PC-9 (cell line): ENCODE measurements at regions of chr17 and their contacts with region 1.

Region 1: GRCh38 chr17:58631523-58632323 is 60.1 kb downstream of the TEX14 start:
- DNase-seq: peak; percentile 92 to 99
- H3K4me3 ChIP-seq: peak overlapping the region; percentile 62
- H3K27ac ChIP-seq: peak overlapping the region; percentile 86
- H3K4me1 ChIP-seq: peaks cover 5% of the 10 kb centered on the region
- H3K27me3 ChIP-seq: no peaks in the 10 kb centered on the region
- CTCF ChIP-seq: peak; percentile 35; the same call in 1 of the 2 replicates

Region 2: GRCh38 chr17:57823469-57824401 is 808.0 kb before region 1 on chr17:
- CTCF ChIA-PET with region 1: no interaction called
- POLR2A ChIA-PET with region 1: no interaction called
- intact Hi-C with region 1: no loop called
- DNase-seq: no peak
- H3K4me3 ChIP-seq: no peak overlapping the region
- H3K27ac ChIP-seq: no peak overlapping the region
- H3K4me1 ChIP-seq: no peaks in the 10 kb centered on the region
- H3K27me3 ChIP-seq: peaks cover 14% of the 10 kb centered on the region
- CTCF ChIP-seq: no peak

Region 3: GRCh38 chr17:58504826-58505521 is 126.7 kb before region 1 on chr17:
- CTCF ChIA-PET with region 1: no interaction called
- POLR2A ChIA-PET with region 1: no interaction called
- intact Hi-C with region 1: no loop called
- DNase-seq: peak in 1 of 2 experiments; percentile 11
- H3K4me3 ChIP-seq: no peak overlapping the region
- H3K27ac ChIP-seq: no peak overlapping the region
- H3K4me1 ChIP-seq: no peaks in the 10 kb centered on the region
- H3K27me3 ChIP-seq: no peaks in the 10 kb centered on the region
- CTCF ChIP-seq: no peak

Region 4: GRCh38 chr17:58534901-58535421 is 96.8 kb before region 1 on chr17:
- CTCF ChIA-PET with region 1: no interaction called
- POLR2A ChIA-PET with region 1: interaction called, 17 read pairs
- intact Hi-C with region 1: no loop called
- DNase-seq: peak in 1 of 2 experiments; percentile 66
- H3K4me3 ChIP-seq: no peak overlapping the region
- H3K27ac ChIP-seq: no peak overlapping the region
- H3K4me1 ChIP-seq: peaks cover 15% of the 10 kb centered on the region
- H3K27me3 ChIP-seq: peaks cover 21% of the 10 kb centered on the region
- CTCF ChIP-seq: no peak

Region 5: DNA sequence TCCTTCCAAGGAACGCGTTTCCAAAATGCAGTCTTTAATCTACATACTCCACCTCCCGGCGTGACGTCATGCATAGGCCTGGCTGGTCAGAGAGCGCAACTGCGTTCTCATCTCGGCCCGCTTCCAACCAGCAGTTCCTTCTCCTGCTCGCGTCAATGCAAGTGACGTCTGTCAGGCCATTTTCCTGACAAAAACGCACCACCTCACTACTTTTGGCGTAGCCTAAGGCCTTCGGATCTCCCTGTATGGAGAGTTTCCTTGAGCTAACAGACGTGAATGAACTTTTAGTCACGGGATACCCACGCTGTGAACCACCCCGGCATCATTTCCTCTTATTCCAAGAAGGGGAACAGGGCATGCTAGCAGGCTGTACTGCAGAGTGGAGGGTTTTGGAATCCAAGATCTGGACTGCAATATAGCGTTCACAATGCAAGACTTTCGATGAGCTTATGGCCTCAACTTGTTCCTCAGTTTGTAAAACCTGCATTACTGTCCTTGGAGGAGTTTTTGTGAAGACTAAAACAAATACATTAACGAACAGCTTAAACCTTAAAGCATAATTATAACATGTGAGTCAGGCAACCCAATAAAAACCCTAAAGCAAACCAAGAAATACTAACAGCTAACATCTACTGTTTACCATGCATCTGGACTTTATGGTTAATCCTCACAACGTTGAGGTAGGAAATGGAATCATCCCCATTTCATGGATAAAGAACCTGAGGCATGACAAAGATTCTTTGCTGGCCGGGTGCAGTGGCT is 35.3 kb after region 1 on chr17:
- CTCF ChIA-PET with region 1: no interaction called
- POLR2A ChIA-PET with region 1: interaction called, 11 read pairs
- intact Hi-C with region 1: no loop called
- DNase-seq: no peak
- H3K4me3 ChIP-seq: no peak overlapping the region
- H3K27ac ChIP-seq: peak overlapping the region; percentile 75
- H3K4me1 ChIP-seq: peaks cover 44% of the 10 kb centered on the region
- H3K27me3 ChIP-seq: no peaks in the 10 kb centered on the region
- CTCF ChIP-seq: no peak

Region 6: DNA sequence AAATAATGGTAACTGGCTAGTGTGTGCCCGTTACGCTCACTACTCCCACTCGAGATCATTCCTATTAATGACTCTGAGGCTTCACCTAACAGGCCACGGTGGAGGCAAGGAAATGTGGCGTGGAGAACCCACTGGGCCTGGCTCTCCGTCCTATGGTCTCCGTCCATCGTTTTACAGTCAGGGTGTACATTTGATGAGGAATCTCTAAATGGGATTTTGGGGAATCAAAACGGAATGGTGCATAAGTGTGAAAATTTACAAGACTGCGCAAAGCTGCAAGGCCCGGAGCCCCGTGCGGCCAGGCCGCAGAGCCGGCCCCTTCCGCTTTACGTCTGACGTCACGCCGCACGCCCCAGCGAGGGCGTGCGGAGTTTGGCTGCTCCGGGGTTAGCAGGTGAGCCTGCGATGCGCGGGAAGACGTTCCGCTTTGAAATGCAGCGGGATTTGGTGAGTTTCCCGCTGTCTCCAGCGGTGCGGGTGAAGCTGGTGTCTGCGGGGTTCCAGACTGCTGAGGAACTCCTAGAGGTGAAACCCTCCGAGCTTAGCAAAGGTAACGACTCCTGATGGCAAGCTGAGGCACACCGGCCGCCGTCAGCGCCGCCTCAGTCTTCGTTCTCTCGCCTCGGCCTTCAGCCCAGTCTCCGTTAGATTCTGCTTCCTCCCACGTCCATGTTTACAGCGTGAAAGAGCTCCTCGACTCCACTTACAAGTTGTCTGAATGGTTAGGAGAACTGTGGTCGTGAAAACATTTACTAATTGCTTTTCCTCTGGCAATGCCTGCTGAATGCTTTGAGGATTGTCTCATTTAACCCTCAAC is 60.7 kb after region 1 on chr17 and contains the start of gene RAD51C:
- CTCF ChIA-PET with region 1: interaction called, 3 read pairs
- POLR2A ChIA-PET with region 1: interaction called, 4 read pairs
- intact Hi-C with region 1: loop called (anchors 5 kb)
- DNase-seq: peak; percentile 77 to 81
- H3K4me3 ChIP-seq: peak within 1 kb of the TSS; percentile 59
- H3K27ac ChIP-seq: peak within 1 kb of the TSS; percentile 62
- H3K4me1 ChIP-seq: peaks cover 24% of the 10 kb centered on the region
- H3K27me3 ChIP-seq: no peaks in the 10 kb centered on the region
- CTCF ChIP-seq: no peak
- total RNA-seq, gene RAD51C: 45.7 and 63.4 TPM in 2 replicates

Region 7: GRCh38 chr17:58741121-58741625 is 109.5 kb after region 1 on chr17:
- CTCF ChIA-PET with region 1: no interaction called
- POLR2A ChIA-PET with region 1: no interaction called
- intact Hi-C with region 1: loop called (anchors 1 kb)
- DNase-seq: peak; percentile 28 to 94
- H3K4me3 ChIP-seq: peak overlapping the region; percentile 6; the same call in 1 of the 2 replicates
- H3K27ac ChIP-seq: peak overlapping the region; percentile 79
- H3K4me1 ChIP-seq: peaks cover 13% of the 10 kb centered on the region
- H3K27me3 ChIP-seq: no peaks in the 10 kb centered on the region
- CTCF ChIP-seq: no peak

Region 8: DNA sequence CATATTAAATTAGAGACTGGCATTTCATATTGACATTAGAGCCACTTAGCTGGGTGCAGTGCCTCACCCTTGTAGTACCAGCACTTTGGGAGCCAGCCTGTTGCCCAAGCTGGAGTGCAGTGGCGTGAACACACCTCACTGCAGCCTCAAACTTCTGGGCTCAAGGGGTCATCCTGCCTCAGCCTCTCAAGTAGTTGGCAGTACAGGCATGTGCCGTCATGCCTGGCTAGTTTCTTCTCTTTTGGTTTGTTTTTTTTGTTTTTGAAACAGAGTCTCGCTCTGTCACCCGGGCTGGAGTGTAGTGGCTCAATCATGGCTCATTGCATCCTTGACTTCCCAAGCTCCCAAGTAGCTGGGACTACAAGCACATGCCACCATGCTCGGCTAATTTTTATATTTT is 132.7 kb after region 1 on chr17:
- CTCF ChIA-PET with region 1: no interaction called
- POLR2A ChIA-PET with region 1: no interaction called
- intact Hi-C with region 1: no loop called
- DNase-seq: no peak
- H3K4me3 ChIP-seq: no peak overlapping the region
- H3K27ac ChIP-seq: no peak overlapping the region
- H3K4me1 ChIP-seq: no peaks in the 10 kb centered on the region
- H3K27me3 ChIP-seq: peaks cover 11% of the 10 kb centered on the region
- CTCF ChIP-seq: no peak

Region 9: DNA sequence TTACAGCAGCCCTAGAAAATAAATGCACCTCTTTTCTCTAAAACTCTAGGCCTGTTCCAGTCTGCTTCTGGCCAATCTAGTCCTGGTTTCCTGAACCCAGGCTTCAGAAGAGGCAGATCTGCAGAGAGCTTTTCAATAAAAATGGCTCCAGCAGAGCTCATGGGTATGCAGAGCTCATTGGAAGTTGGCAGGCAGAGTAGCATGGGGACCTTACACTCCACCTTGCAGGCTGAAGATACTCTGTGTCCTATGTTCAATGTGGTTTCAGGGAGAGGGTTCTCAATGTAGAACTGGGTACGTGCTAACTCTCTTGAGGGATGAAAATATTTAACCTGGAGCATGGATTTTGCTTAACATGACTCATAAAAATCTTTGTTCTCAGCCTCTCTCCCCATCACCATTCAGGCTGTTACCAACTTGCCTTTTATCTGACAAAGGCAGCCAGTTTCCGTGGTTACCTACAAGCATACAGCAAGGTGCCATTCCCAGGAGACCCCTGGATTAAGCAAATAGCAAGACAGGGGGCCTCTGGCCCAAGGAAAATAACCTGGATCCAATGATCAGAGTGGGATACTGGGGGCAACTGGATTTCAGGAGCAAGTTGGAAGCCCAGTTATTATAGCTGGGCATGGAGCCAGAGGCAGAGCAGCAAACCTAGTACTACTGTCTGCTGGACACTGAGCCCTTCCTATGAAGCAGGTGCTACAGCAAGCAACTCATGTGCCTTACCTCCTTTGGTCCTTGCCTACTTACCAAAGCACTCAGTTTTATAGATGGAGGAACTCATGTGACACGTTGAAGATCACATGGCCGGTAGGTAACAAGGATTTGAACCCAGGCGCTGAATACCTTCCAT is 835.5 kb after region 1 on chr17:
- CTCF ChIA-PET with region 1: no interaction called
- POLR2A ChIA-PET with region 1: interaction called, 12 read pairs
- intact Hi-C with region 1: no loop called
- DNase-seq: no peak
- H3K4me3 ChIP-seq: no peak overlapping the region
- H3K27ac ChIP-seq: no peak overlapping the region
- H3K4me1 ChIP-seq: no peaks in the 10 kb centered on the region
- H3K27me3 ChIP-seq: no peaks in the 10 kb centered on the region
- CTCF ChIP-seq: no peak